MCF 10A (cell line): ENCODE measurements at regions of chr12 and their contacts with region 1.

Region 1: DNA sequence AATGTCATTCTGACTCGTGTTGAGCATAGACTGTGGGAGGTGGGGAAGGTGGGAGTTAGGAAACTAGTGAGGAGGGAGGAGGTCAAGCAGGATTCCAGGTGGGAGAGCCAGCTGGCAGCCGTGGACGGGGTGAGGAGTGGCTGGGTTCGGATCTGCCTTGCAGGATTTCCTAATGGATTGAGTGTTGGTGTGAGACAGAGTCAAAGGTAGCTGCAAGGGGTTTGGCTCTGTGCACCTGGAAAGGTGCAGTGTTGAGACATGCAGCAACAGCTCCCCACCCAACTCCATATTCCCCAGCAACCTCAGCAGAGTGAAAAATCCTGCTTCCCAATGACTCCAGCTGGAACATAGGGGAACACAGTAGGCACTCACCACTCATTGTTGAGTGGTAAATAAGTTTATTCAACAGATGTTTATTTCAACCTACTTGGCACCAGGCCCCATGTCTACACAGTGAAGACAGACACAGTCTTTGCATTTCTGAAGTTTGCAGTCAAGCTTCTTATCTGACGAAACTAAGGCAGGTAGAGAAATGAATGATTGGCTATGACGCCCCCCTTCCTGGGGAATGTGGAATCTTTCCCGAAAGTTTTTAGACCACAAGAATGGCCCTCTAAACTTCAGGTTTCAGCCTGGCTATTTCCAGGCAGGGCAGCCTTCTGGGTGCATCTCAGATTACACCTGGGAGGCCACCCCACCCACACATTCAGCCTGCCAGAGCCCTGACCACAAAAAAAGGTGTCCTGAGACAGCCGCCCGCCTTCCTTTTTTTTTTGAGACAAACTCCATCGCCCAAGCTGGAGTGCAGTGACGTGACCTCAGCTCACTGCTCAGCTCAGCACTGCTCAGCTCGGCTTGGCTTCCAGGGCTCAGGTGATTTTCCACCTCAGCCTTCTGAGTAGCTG is 37.9 kb upstream of the PLEKHG6 start:
- DNase-seq: peak; percentile 96
- H3K4me3 Mint-ChIP-seq: no peak overlapping the region
- H3K27ac Mint-ChIP-seq: peak overlapping the region; percentile 96
- H3K4me1 Mint-ChIP-seq: peaks cover 28% of the 10 kb centered on the region
- H3K27me3 Mint-ChIP-seq: no peaks in the 10 kb centered on the region
- CTCF ChIP-seq: no peak

Region 2: GRCh38 chr12:5977556-5977955 is 295.0 kb before region 1 on chr12:
- CTCF ChIA-PET with region 1: no interaction called
- POLR2A ChIA-PET with region 1: no interaction called
- intact Hi-C with region 1: no loop called
- DNase-seq: no peak
- H3K4me3 Mint-ChIP-seq: no peak overlapping the region
- H3K27ac Mint-ChIP-seq: no peak overlapping the region
- H3K4me1 Mint-ChIP-seq: no peaks in the 10 kb centered on the region
- H3K27me3 Mint-ChIP-seq: peaks cover 68% of the 10 kb centered on the region
- CTCF ChIP-seq: no peak

Region 3: DNA sequence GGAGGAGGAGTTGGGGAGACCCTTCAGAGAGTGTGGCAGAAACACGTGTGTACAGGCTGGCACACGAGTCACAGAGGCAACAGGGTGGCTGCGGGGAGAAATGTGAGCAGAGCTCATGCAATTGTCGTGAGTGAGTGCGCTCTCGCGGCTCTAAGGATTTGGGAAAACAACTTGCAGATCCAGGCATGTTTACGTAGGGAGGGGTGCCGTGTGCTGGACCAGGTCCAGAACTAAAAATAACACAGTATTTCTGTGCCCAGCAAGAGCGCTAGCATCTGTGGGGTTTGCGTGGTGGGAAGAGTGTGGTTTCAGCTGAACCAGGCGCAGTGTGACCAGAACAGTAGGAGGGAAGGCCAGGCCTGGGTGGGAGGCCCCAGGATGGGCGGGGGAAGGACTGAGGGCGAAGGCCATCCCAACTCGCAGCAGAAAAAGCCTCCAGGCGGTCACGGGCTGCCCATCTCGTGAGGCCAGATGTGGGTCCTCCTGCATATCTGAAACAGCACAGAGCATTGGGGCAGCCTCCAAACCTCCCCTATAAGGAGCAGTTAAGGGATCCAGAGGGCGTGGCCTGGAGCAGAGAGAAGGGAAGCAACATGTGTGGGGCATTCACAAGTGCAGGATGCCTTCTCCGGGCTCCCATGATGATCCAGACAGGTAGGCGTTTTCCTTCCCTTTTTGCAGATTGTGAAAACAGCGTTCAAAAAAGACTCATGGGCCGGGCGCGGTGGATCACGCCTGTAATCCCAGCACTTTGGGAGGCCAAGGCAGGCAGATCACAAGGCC is 90.2 kb before region 1 on chr12:
- CTCF ChIA-PET with region 1: interaction called, 5 read pairs
- POLR2A ChIA-PET with region 1: interaction called, 40 read pairs
- intact Hi-C with region 1: no loop called
- DNase-seq: peak; percentile 92
- H3K4me3 Mint-ChIP-seq: peak overlapping the region; percentile 36
- H3K27ac Mint-ChIP-seq: no peak overlapping the region
- H3K4me1 Mint-ChIP-seq: peaks cover 19% of the 10 kb centered on the region
- H3K27me3 Mint-ChIP-seq: no peaks in the 10 kb centered on the region
- CTCF ChIP-seq: no peak

Region 4: GRCh38 chr12:6230321-6231110 is 42.0 kb before region 1 on chr12:
- CTCF ChIA-PET with region 1: interaction called, 290 read pairs
- POLR2A ChIA-PET with region 1: interaction called, 480 read pairs
- intact Hi-C with region 1: loop called (anchors 5 kb)
- DNase-seq: peak; percentile 65
- H3K4me3 Mint-ChIP-seq: peak overlapping the region; percentile 68
- H3K27ac Mint-ChIP-seq: peak overlapping the region; percentile 98
- H3K4me1 Mint-ChIP-seq: peaks cover 44% of the 10 kb centered on the region
- H3K27me3 Mint-ChIP-seq: no peaks in the 10 kb centered on the region
- CTCF ChIP-seq: no peak

Region 5: GRCh38 chr12:6241495-6241894 is 31.1 kb before region 1 on chr12:
- CTCF ChIA-PET with region 1: interaction called, 3 read pairs
- POLR2A ChIA-PET with region 1: interaction called, 10 read pairs
- intact Hi-C with region 1: no loop called
- DNase-seq: peak; percentile 45
- H3K4me3 Mint-ChIP-seq: no peak overlapping the region
- H3K27ac Mint-ChIP-seq: no peak overlapping the region
- H3K4me1 Mint-ChIP-seq: no peaks in the 10 kb centered on the region
- H3K27me3 Mint-ChIP-seq: no peaks in the 10 kb centered on the region
- CTCF ChIP-seq: no peak

Region 6: DNA sequence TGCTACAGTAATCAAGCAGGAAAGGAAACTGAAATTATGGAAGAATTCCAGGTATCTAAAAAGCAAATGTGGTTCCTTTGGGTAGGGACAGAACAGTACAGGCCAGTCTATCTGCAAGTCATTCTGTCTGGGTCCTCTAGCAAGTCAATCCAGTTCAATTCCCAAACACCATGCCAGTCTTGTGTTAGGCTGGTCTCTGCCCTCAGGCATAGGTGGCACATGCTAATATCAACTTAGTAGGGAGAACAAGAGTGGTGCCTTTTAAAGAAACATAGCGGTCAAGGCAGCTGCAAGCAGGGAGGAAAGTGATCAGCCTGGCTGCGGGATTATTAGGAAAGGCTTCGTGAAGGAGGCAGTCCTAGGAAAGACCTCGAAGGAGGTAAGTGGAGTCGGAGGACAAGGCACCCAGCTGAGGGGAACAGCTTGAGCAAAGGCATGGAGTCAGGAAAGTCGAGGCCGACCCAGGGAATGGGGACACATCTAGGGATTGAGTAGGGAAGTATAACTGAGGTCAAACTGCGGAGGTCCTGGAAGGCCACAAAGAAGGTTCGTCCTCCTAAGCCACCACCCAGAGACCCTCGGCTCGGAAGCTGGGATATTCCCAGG is 34.2 kb after region 1 on chr12:
- CTCF ChIA-PET with region 1: no interaction called
- POLR2A ChIA-PET with region 1: no interaction called
- intact Hi-C with region 1: no loop called
- DNase-seq: no peak
- H3K4me3 Mint-ChIP-seq: no peak overlapping the region
- H3K27ac Mint-ChIP-seq: no peak overlapping the region
- H3K4me1 Mint-ChIP-seq: peaks cover 10% of the 10 kb centered on the region
- H3K27me3 Mint-ChIP-seq: peaks cover 15% of the 10 kb centered on the region
- CTCF ChIP-seq: no peak

Region 7: DNA sequence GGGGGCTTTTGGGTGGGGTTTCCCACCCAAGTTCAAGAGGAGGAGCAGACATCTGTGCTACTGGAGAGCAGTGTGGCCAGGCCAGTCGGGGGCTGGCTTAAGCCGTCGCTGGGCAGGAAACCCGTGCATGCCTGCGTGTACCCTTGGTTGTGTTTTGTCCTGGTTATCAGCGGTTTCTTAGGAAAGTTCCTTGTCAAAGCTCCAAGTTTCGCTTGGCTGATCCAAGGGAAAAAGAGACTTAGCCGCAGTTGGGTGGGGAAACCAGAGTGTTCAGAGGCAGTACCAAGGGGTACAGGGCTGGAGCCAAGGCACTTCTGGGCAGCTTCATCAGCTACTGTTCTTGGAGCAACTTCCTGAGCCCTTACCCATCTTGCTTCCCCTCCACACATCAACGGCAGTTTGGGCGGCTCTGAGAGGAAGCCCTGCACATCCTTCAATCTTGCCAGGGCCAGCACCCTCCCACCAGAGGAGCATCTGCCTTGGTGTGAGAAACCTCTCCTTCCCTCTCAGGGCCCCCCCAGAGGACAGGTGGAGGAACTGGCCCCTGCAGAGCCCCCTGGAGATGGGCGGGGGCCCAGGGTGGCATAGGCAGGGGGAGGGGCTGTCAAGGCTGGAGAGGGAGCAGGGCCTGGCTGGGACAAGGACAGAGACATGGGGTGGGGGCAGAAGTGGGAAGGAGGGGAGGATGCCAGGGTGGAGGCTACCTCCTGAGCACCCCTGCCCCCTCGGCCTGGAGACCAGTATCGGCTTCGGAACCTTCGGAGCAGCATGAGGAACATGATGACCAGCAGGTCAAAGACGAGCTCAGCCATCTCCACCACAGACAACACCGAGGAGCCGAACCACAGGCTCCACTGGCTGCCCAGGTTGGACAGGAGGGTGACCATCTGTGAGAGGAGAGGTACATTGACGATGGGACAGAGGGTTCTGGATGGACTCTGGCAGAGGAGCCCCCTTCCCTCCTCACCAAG is 75.1 kb after region 1 on chr12:
- CTCF ChIA-PET with region 1: no interaction called
- POLR2A ChIA-PET with region 1: no interaction called
- intact Hi-C with region 1: no loop called
- DNase-seq: no peak
- H3K4me3 Mint-ChIP-seq: no peak overlapping the region
- H3K27ac Mint-ChIP-seq: no peak overlapping the region
- H3K4me1 Mint-ChIP-seq: peaks cover 36% of the 10 kb centered on the region
- H3K27me3 Mint-ChIP-seq: no peaks in the 10 kb centered on the region
- CTCF ChIP-seq: no peak

Region 8: GRCh38 chr12:6647083-6647604 is 374.6 kb after region 1 on chr12 and contains the start of gene ACRBP:
- CTCF ChIA-PET with region 1: no interaction called
- POLR2A ChIA-PET with region 1: no interaction called
- intact Hi-C with region 1: no loop called
- DNase-seq: no peak
- H3K4me3 Mint-ChIP-seq: no peak within 1 kb of the TSS
- H3K27ac Mint-ChIP-seq: peak within 1 kb of the TSS; percentile 64
- H3K4me1 Mint-ChIP-seq: no peaks in the 10 kb centered on the region
- H3K27me3 Mint-ChIP-seq: peaks cover 11% of the 10 kb centered on the region
- CTCF ChIP-seq: no peak
- total RNA-seq, gene ACRBP: 0.30 and 2.5 TPM in 2 replicates